ENCODE measurements at regions of chr15 and their contacts with region 1.

Region 1: GRCh38 chr15:42371125-42371524 is 11.8 kb downstream of the CAPN3 start:
- DNase-seq: peak; percentile 69
- ATAC-seq: peak; percentile 87
- H3K4me3 ChIP-seq: no peak overlapping the region
- H3K27ac ChIP-seq: peak overlapping the region; percentile 41
- H3K4me1 ChIP-seq: 0 out of 2 replicates have a peak, but pooled peaks cover 8% of the 10 kb centered on the region
- H3K27me3 ChIP-seq: no peaks in the 10 kb centered on the region
- CTCF ChIP-seq: peak; percentile 68

Region 2: GRCh38 chr15:42107473-42107872 is 263.7 kb before region 1 on chr15:
- CTCF ChIA-PET with region 1: no interaction called
- POLR2A ChIA-PET with region 1: no interaction called
- intact Hi-C with region 1: no loop called
- DNase-seq: no peak
- ATAC-seq: no peak
- H3K4me3 ChIP-seq: no peak overlapping the region
- H3K27ac ChIP-seq: no peak overlapping the region
- H3K4me1 ChIP-seq: peaks cover 2% of the 10 kb centered on the region; the same call in 1 of the 2 replicates
- H3K27me3 ChIP-seq: no peaks in the 10 kb centered on the region
- CTCF ChIP-seq: no peak

Region 3: GRCh38 chr15:42215913-42216829 is 155.0 kb before region 1 on chr15:
- CTCF ChIA-PET with region 1: no interaction called
- POLR2A ChIA-PET with region 1: no interaction called
- intact Hi-C with region 1: loop called (anchors 1 kb)
- DNase-seq: peak; percentile 18
- ATAC-seq: peak; percentile 58
- H3K4me3 ChIP-seq: no peak overlapping the region
- H3K27ac ChIP-seq: no peak overlapping the region
- H3K4me1 ChIP-seq: no peaks in the 10 kb centered on the region
- H3K27me3 ChIP-seq: no peaks in the 10 kb centered on the region
- CTCF ChIP-seq: peak; percentile 33; the same call in 1 of the 2 replicates

Region 4: DNA sequence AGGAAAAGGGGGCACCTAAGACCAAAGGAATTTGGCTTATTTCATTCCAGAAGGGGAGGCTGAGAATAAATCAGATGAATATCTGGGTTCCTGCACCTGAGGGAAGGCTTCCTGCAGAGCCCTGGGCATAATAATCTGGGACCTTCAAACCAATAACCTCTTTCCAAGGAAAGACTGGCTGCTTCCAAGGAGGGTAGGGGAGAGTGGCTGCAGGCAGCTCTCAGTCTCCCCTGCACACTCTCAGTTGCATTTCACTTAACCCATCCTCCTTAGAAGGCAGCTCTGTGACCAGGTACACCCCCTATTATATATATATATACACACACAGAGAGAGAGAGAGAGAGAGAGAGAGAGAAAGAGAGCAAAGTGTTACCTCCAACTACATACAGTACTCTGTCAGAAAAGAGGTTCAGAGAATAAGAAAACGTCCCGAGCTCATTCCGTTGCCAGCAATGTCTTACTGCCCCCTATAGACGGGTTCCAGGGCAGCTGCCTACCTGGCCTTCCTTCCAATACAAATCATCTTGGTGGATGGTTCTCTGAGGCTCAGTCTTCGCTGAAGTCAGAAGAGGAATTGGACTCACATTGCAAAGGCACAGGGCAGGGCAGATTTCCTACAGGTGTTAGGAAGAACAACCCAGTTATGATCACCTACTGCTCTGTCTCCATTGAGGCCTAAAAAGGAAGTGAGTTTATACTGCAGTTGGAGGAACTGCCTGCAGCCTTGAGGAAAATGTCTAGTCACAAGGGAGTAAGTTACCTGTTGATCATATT is 14.3 kb after region 1 on chr15:
- CTCF ChIA-PET with region 1: interaction called, 13 read pairs
- POLR2A ChIA-PET with region 1: no interaction called
- intact Hi-C with region 1: no loop called
- DNase-seq: peak; percentile 74
- ATAC-seq: peak; percentile 97
- H3K4me3 ChIP-seq: no peak overlapping the region
- H3K27ac ChIP-seq: no peak overlapping the region
- H3K4me1 ChIP-seq: no peaks in the 10 kb centered on the region
- H3K27me3 ChIP-seq: no peaks in the 10 kb centered on the region
- CTCF ChIP-seq: peak; percentile 89

Region 5: DNA sequence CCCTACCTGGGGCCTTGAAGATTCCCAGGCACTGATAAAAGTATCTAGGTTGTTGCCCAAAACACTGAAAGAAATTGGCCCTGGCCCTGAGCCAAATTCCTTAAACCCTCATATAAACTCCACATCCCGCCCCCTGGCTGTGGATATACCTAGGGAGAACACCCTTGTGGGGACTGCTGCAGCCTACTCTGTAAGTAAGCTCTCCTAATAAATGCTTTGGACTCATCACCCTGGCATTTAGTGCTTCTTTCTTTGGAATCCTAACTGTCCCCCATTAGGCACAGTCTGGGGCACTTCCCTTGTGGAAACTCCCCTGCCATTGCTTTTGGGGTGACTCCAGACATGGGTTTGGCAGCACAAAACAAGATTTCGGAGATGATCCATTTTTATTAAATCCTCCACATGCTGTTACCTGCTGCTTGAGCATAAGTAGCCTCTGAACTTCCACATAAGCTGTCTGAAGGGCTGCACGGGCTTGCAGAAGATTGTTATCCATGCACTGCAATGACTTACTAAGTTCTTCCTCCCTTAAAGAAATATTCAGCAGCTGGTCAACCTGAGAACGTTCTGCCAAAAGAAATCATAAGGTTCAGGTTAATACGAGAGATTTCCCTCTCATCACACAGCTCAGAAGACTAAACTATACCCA is 73.4 kb after region 1 on chr15:
- CTCF ChIA-PET with region 1: no interaction called
- POLR2A ChIA-PET with region 1: no interaction called
- intact Hi-C with region 1: no loop called
- DNase-seq: no peak
- ATAC-seq: no peak; the same call in 1 of the 2 replicates
- H3K4me3 ChIP-seq: no peak overlapping the region
- H3K27ac ChIP-seq: no peak overlapping the region
- H3K4me1 ChIP-seq: no peaks in the 10 kb centered on the region
- H3K27me3 ChIP-seq: no peaks in the 10 kb centered on the region
- CTCF ChIP-seq: no peak

Measured in PC-3 (cell line).